Body of pancreas (tissue), 4 donors: ENCODE measurements at regions of chr1 and their contacts with region 1.

Region 1: GRCh38 chr1:175498002-175498401 is 245.4 kb downstream of the TNR start:
- DNase-seq: no peak
- ATAC-seq: no peak
- H3K4me3 ChIP-seq: no peak overlapping the region
- H3K27ac ChIP-seq: no peak overlapping the region
- H3K4me1 ChIP-seq: no peaks in the 10 kb centered on the region
- H3K27me3 ChIP-seq: no peaks in the 10 kb centered on the region
- CTCF ChIP-seq: no peak
- POLR2A ChIP-seq: no peak

Region 2: GRCh38 chr1:175717610-175718540 is 219.9 kb after region 1 on chr1:
- intact Hi-C with region 1: loop called (anchors 10 kb)
- DNase-seq: no peak
- ATAC-seq: no peak
- H3K4me3 ChIP-seq: no peak overlapping the region
- H3K27ac ChIP-seq: no peak overlapping the region
- H3K4me1 ChIP-seq: no peaks in the 10 kb centered on the region
- H3K27me3 ChIP-seq: no peaks in the 10 kb centered on the region
- CTCF ChIP-seq: no peak
- POLR2A ChIP-seq: no peak